Pancreas (tissue), 10 donors: ENCODE measurements at regions of chr19 and their contacts with region 1.

Region 1: DNA sequence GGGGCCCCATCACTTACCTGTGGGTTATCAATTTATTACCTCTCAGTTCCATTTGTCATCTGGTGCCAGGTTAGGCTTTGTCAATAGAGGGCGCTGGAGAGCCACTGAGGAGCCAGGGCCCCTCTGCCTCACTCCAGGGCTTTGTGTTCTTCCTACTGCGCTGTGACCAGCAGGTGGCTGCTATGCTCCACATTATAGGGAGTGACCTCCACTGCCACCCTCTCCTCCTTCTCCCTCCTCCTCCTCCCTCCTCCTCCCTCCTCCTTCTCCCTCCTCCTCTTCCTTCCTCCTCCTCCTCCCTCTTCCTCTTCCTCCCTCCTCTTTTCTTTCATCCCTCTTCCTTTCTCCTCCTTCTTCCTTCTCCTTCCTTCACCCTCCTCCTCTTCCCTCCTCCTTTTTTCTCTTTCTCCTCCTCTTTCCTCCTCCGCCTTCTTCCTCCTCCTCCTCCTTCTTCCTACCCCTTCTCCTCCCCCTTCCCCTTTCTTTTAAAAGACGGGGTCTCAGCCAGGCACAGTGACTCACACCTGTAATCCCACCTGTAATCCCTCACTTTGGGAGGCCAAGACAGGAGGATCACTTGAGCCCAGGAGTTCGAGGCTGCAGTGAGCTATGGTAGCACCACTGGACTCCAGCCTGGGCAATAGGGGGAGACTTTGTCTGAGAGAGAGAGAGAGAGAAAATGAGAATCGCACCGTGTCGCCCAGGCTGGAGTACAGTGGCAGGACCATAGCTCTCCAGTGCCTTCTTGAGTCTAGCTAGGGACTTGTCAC is 10.3 kb upstream of the ZBTB32 start:
- DNase-seq: peak; percentile 86 to 94 (median 88)
- ATAC-seq: peak; percentile 99 to 100 (median 100)
- H3K4me3 ChIP-seq: no peak overlapping the region
- H3K27ac ChIP-seq: no peak overlapping the region
- H3K4me1 ChIP-seq: no peaks in the 10 kb centered on the region
- H3K27me3 ChIP-seq: no peaks in the 10 kb centered on the region
- CTCF ChIP-seq: peak; percentile 92 to 96 (median 96)

Region 2: DNA sequence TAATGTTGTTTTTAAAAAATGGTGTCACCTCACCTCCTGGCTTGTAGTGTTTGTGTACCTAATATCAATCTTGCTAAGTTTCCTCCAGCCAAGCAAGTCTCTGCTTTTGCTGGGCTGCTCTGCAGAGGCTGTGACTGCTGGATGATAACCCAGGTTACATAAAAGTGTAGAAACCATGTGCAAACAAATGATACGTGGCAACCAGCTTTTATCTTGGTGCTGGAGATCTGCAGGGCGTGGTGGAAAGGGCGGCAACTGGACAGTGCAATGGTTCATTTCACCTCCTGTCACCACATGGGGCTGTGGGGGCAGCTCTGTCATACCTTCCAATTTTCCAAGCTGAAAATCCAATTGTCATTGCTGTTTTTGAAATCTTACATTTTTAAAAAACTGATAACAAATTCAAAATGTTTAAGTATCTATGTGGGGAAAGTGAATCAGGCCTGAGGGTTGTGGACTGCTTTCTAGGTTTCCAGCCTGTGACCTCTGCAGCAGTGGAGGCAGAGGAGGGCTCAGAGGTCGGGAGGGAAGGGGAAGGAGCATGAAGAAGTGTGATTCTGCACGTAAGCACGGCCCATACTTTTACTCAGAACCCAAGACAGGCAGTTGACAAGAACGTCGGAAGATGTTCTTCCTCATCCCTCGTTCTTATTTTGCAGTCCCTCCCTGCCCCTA is 313.4 kb before region 1 on chr19:
- intact Hi-C with region 1: no loop called
- DNase-seq: peak in 1 of 6 donors; percentile 26
- ATAC-seq: peak; percentile 55 to 92 (median 86)
- H3K4me3 ChIP-seq: no peak overlapping the region
- H3K27ac ChIP-seq: no peak overlapping the region
- H3K4me1 ChIP-seq: peaks cover 0 to 4% (median 0%) of the 10 kb centered on the region in 3 donors
- H3K27me3 ChIP-seq: no peaks in the 10 kb centered on the region
- CTCF ChIP-seq: no peak

Region 3: GRCh38 chr19:35657904-35658700 is 35.9 kb before region 1 on chr19:
- intact Hi-C with region 1: no loop called
- DNase-seq: no peak
- ATAC-seq: no peak
- H3K4me3 ChIP-seq: no peak overlapping the region
- H3K27ac ChIP-seq: no peak overlapping the region
- H3K4me1 ChIP-seq: no peaks in the 10 kb centered on the region
- H3K27me3 ChIP-seq: no peaks in the 10 kb centered on the region
- CTCF ChIP-seq: no peak

Region 4: DNA sequence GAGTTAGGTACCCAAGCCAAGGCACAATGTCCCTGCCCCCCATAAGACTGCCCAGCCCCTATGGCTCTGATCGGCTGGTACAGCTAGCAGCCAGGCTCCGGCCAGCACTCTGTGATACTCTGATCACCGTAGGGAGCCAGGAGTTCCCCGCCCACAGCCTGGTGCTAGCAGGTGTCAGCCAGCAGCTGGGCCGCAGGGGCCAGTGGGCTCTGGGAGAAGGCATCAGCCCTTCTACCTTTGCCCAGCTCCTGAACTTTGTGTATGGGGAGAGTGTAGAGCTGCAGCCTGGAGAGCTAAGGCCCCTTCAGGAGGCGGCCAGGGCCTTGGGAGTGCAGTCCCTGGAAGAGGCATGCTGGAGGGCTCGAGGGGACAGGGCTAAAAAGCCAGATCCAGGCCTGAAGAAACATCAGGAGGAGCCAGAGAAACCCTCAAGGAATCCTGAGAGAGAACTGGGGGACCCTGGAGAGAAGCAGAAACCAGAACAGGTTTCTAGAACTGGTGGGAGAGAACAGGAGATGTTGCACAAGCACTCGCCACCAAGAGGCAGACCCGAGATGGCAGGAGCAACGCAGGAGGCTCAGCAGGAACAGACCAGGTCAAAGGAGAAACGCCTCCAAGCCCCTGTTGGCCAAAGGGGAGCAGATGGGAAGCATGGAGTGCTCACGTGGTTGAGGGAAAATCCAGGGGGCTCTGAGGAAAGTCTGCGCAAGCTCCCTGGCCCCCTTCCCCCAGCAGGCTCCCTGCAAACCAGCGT is 20.8 kb after region 1 on chr19:
- intact Hi-C with region 1: loop called in 1 of 3 experiments (anchors 2 kb)
- DNase-seq: peak in 3 of 6 donors; percentile 21 to 66 (median 34)
- ATAC-seq: no peak
- H3K4me3 ChIP-seq: no peak overlapping the region
- H3K27ac ChIP-seq: no peak overlapping the region
- H3K4me1 ChIP-seq: peaks cover 6 to 15% (median 8%) of the 10 kb centered on the region in 3 donors
- H3K27me3 ChIP-seq: no peaks in the 10 kb centered on the region
- CTCF ChIP-seq: no peak

Region 5: GRCh38 chr19:35931161-35931873 is 237.3 kb after region 1 on chr19:
- intact Hi-C with region 1: loop called in 1 of 3 experiments (anchors 10 kb)
- DNase-seq: peak; percentile 97 to 100 (median 100)
- ATAC-seq: peak; percentile 96 to 99 (median 98)
- H3K4me3 ChIP-seq: peak overlapping the region in 1 of 4 donors; percentile 19
- H3K27ac ChIP-seq: peak overlapping the region in 2 of 4 donors; percentile 43 to 66
- H3K4me1 ChIP-seq: peaks cover 0 to 10% (median 6%) of the 10 kb centered on the region in 3 donors
- H3K27me3 ChIP-seq: no peaks in the 10 kb centered on the region
- CTCF ChIP-seq: peak; percentile 42 to 80 (median 73)